K562 (cell line): ENCODE measurements at regions of chr15 and their contacts with region 1.

Region 1: GRCh38 chr15:58077427-58077826 is 11.9 kb upstream of the ALDH1A2 start:
- DNase-seq: peak in 2 of 4 experiments; percentile 43 to 64
- ATAC-seq: peak; percentile 91
- H3K4me3 ChIP-seq: no peak overlapping the region
- H3K27ac ChIP-seq: no peak overlapping the region
- H3K4me1 ChIP-seq: peaks cover 0 to 35% of the 10 kb centered on the region in 2 experiments; a peak in 4 of 5 replicates
- H3K27me3 ChIP-seq: no peaks in the 10 kb centered on the region
- CTCF ChIP-seq: peak; percentile 57 to 79 (median 65)
- EP300 ChIP-seq: peak; percentile 4; the same call in 1 of the 2 replicates
- POLR2A ChIP-seq: no peak
- RAD21 ChIP-seq: peak; percentile 84 to 95

Region 2: GRCh38 chr15:58010983-58011382 is 66.4 kb before region 1 on chr15:
- CTCF ChIA-PET with region 1: no interaction called
- POLR2A ChIA-PET with region 1: no interaction called
- in situ Hi-C with region 1: no loop called
- intact Hi-C with region 1: no loop called
- DNase-seq: no peak
- ATAC-seq: no peak
- H3K4me3 ChIP-seq: no peak overlapping the region
- H3K27ac ChIP-seq: no peak overlapping the region
- H3K4me1 ChIP-seq: peaks cover 0 to 17% of the 10 kb centered on the region in 2 experiments; a peak in 3 of 5 replicates
- H3K27me3 ChIP-seq: no peaks in the 10 kb centered on the region
- CTCF ChIP-seq: no peak
- EP300 ChIP-seq: no peak
- POLR2A ChIP-seq: no peak
- RAD21 ChIP-seq: no peak

Region 3: DNA sequence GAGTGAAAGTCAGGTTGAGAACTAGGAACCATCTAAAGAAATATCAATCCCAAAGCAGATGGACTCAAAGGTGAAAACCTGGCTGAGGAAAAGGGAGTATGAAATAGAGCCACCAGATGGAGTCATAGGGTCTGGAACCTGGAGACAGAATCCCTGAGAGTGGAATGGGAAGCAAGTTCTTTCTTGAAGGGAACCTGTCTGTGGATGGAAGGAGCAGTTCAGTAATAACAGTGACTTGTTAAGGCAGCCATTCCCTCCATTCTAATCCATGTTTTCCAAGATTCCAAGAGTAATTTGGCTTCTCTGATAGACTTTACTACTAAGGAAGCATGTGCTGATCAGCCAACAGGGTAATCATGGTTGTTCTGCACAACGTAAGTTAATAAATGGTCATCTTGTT is 38.3 kb after region 1 on chr15:
- CTCF ChIA-PET with region 1: no interaction called
- POLR2A ChIA-PET with region 1: no interaction called
- in situ Hi-C with region 1: loop called (anchors 5 kb)
- intact Hi-C with region 1: loop called (anchors 1 kb)
- DNase-seq: peak; percentile 20 to 63 (median 34)
- ATAC-seq: peak; percentile 19; the same call in 2 of the 3 replicates
- H3K4me3 ChIP-seq: no peak overlapping the region
- H3K27ac ChIP-seq: no peak overlapping the region
- H3K4me1 ChIP-seq: peaks cover 4 to 52% of the 10 kb centered on the region in 2 experiments; a peak in 4 of 5 replicates
- H3K27me3 ChIP-seq: no peaks in the 10 kb centered on the region
- CTCF ChIP-seq: peak; percentile 43 to 60 (median 49); a peak in 4 of 6 replicates
- EP300 ChIP-seq: no peak; the same call in 1 of the 2 replicates
- POLR2A ChIP-seq: no peak
- RAD21 ChIP-seq: peak; percentile 69 to 89

Region 4: DNA sequence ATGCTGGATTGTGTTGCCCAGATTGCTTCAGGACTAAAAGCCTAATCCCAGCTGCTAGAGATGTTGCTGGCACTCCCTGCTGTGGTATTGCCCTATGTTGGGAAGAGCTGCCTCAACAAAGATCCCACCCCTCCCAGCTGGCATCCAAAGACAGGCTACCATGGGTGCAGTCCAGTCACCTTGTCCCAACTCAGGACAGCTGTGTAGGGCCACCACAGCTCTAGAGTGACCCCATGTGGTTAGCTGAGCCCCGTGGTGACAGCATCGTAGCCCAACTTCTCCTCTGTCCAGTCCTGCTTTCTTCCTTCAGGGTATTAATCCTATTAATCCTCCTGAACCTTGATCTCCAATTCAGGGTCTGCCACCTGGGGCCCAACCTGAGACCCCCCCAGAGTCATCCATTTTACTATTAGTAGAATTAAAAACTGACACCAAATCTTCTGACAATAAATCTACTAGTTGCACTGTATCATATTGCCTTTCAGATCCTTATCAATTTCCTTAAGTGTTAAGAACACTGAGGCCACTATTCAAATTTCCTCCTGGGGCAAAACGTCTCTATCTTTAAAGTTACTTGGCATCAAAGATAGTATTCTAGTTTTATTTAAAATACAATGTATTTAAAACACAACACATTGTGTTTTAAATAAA is 144.3 kb after region 1 on chr15:
- CTCF ChIA-PET with region 1: interaction called, 3 read pairs
- POLR2A ChIA-PET with region 1: no interaction called
- in situ Hi-C with region 1: no loop called
- intact Hi-C with region 1: loop called (anchors 1 kb)
- DNase-seq: peak; percentile 56 to 75 (median 66)
- ATAC-seq: peak; percentile 98
- H3K4me3 ChIP-seq: no peak overlapping the region
- H3K27ac ChIP-seq: no peak overlapping the region
- H3K4me1 ChIP-seq: peaks cover 3 to 10% of the 10 kb centered on the region in 2 experiments; a peak in 4 of 5 replicates
- H3K27me3 ChIP-seq: no peaks in the 10 kb centered on the region
- CTCF ChIP-seq: peak; percentile 81 to 89 (median 86)
- EP300 ChIP-seq: no peak
- POLR2A ChIP-seq: no peak
- RAD21 ChIP-seq: peak; percentile 84 to 91